ENCODE measurements at regions of chr1 and their contacts with region 1.

Region 1: DNA sequence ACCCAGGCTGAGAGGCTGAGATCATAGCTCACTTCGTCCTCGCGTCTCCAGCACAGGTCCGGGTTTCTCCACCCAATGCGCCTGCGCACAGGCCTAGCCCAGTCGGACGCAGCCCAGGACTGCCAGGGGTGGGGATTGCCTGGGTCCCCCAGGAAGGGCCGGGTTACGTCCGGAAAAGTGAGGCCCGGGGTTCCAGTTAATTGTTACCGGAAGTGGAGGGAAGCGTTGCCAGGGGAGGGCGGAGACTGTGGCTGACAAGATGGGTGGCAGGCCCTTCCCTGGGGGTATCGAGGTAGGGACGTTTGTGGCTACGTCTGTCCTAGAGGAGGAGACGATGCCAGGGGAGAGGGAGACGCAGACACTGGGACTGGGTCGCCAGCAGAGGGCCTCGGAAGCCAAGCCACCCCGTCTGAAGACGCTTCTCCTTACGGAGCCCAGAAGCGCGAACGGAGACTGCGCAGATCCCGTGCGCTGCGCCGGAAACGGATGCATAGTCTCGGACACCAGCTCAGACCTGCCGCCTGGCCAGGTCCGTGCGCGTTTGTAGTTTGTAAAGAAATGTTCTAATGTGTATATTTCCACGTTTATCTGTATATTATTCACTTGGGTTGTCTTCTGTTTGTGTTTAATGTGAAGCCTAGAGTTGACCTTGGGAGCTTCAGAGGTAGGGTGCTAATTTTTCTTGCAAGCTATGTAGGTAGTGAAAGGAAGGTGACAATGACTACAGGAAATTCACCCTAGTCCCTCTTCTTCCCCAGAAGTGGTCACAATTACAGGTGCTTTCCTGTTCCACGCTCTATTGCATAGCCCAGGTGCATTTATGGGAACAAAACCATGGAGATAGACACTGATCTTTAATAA is 7.3 kb downstream of the RSRP1 start:
- DNase-seq: peak; percentile 93
- H3K4me3 ChIP-seq: peak overlapping the region; percentile 64
- H3K27ac ChIP-seq: peak overlapping the region; percentile 84
- H3K4me1 ChIP-seq: peaks cover 79% of the 10 kb centered on the region
- CTCF ChIP-seq: peak; percentile 75

Region 2: DNA sequence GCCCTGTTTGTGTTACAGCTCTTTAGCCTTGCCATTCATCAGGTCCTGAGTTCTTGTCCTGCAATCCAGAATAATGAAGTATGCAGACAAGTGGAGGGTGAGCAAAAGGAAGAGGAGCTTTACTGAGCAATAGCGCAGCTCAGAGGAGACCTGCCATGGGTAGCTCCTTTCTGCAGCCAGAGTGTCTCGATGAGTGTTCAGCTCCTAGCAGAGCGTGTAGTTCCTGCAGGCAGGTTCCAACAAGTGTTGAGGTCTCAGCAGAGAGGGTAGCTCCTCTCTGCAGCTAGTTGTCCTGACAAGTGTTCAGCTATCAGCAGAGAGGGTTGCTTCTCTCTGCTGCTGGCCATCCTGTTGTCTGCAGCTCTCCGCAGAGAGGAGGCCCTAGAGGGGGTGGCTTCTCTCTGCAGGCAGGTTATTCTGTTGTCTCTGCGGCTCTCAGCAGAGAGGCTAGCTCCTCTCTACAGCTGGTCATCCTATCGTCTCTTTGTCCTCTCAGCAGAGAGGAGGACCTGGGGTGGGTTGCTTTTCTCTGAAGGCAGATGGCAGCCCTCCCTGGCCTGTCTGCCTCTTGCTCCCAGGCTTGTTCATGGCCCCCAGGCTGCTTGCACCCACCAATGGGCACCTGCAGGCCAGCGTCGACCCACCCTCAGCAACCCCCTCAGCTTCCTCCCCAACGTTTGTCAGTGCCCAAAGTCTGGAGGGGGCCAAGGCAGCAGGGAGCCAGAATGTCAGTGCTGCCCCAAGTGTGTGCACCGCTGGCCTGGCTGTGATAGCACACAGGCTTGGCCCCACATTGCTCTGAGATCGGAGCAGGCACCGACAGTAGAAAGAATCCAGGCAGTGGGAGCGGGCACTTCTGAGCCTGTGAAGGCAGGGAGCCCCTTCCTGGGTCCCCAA is 197.3 kb before region 1 on chr1:
- CTCF ChIA-PET with region 1: no interaction called
- POLR2A ChIA-PET with region 1: no interaction called
- intact Hi-C with region 1: no loop called
- DNase-seq: no peak
- H3K4me3 ChIP-seq: no peak overlapping the region
- H3K27ac ChIP-seq: no peak overlapping the region
- H3K4me1 ChIP-seq: no peaks in the 10 kb centered on the region
- CTCF ChIP-seq: no peak

Region 3: DNA sequence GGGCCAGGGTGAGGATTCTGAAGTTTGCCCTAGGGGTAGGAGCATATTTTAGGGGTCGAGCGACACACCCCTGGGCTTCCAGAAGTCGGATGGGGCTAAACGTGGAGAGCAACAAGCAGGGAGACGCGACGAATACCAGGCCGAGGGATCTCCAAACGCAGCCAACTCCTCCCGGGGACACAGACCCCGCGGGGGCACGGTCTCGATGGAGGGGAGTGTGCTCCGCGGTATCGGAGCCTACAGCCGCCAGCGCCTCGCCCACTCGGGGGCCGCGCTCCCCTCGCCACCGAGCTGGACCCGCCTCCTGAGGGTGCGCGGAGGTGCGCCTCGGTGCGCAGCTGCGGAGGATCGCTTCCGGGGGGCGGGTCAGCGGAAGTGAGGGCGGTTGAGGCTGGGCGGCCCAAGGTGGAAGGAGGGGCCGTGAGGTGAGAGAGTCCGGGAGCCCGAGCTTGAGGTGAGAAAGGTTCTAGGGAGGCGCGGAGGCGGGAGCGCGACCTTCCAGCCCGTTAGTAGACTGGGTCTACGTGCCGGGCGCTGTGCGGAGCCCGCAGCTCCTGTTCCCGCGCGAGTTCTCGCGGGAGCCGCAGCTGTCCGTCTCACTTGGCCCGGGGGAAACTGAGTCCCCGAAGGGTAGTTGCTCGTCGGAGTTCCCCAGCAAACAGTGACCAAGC is 579.8 kb after region 1 on chr1 and contains the start of gene MTFR1L:
- CTCF ChIA-PET with region 1: no interaction called
- POLR2A ChIA-PET with region 1: no interaction called
- intact Hi-C with region 1: loop called (anchors 10 kb)
- DNase-seq: peak; percentile 92
- H3K4me3 ChIP-seq: peak within 1 kb of the TSS; percentile 84
- H3K27ac ChIP-seq: peak within 1 kb of the TSS; percentile 87
- H3K4me1 ChIP-seq: peaks cover 30% of the 10 kb centered on the region
- CTCF ChIP-seq: no peak
- total RNA-seq, gene MTFR1L: 33.6 and 35.3 TPM in 2 replicates